Heart left ventricle (tissue), 16 donors: ENCODE measurements at regions of chr9 and their contacts with region 1.

Region 1: DNA sequence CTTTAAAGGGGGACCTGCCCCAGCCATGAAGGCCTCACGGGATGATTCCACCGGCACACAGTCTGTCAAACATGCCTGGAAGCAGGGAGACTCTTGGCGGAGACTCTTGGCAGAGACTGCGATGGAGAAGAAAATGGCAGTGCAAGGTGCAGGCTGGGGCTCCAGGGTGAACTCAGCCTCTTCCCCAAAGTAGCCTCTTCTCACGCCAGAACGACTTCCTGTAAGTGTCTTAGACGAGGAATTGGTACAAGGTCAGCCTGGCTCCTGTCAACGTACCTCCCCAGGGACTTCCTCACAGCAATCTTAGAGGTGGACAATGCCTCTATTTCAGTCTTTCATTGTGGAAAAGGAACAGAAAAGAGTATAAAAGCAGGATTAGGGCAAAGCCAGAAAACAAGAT is 109.3 kb downstream of the UGCG start:
- DNase-seq: no peak
- ATAC-seq: no peak
- H3K4me3 ChIP-seq: no peak overlapping the region
- H3K27ac ChIP-seq: peak overlapping the region in 2 of 12 donors; percentile 8 to 27
- H3K4me1 ChIP-seq: peaks cover 0 to 23% (median 0%) of the 10 kb centered on the region in 12 donors
- H3K27me3 ChIP-seq: no peaks in the 10 kb centered on the region
- CTCF ChIP-seq: no peak
- POLR2A ChIP-seq: no peak

Region 2: GRCh38 chr9:111839388-111839787 is 166.6 kb before region 1 on chr9:
- intact Hi-C with region 1: no loop called
- DNase-seq: peak in 1 of 5 donors; percentile 34
- ATAC-seq: peak in 2 of 4 donors; percentile 10 to 45
- H3K4me3 ChIP-seq: no peak overlapping the region
- H3K27ac ChIP-seq: no peak overlapping the region
- H3K4me1 ChIP-seq: peaks cover 0 to 25% (median 0%) of the 10 kb centered on the region in 12 donors
- H3K27me3 ChIP-seq: no peaks in the 10 kb centered on the region
- CTCF ChIP-seq: no peak
- POLR2A ChIP-seq: no peak

Region 3: GRCh38 chr9:111957856-111958652 is 47.9 kb before region 1 on chr9:
- intact Hi-C with region 1: no loop called
- DNase-seq: no peak
- ATAC-seq: peak; percentile 21 to 74 (median 47)
- H3K4me3 ChIP-seq: peak overlapping the region in 3 of 12 donors; percentile 5 to 28 (median 19)
- H3K27ac ChIP-seq: peak overlapping the region in 1 of 12 donors; percentile 77
- H3K4me1 ChIP-seq: peaks cover 0 to 43% (median 7%) of the 10 kb centered on the region in 12 donors
- H3K27me3 ChIP-seq: no peaks in the 10 kb centered on the region
- CTCF ChIP-seq: no peak
- POLR2A ChIP-seq: no peak

Region 4: DNA sequence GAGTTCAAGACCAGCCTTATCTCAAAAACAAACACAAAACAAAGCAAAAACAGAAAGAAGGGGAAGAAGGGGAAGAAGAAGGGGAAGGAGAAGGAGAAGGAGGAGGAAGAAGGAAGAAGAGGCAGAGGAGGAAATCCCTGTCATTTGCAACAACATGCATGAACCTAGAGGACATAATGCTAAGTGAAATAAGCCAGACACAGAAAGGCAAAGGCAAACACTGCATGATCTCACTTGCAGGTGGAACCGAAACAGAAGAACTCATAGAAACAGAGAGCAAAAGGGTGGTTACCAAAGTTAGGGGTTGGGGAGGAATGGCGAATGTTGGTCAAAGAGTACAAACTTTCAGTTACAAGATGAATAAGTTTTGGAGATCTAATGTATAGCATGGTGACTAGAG is 26.1 kb after region 1 on chr9:
- intact Hi-C with region 1: loop called in 1 of 10 experiments (anchors 2 kb)
- DNase-seq: no peak
- ATAC-seq: no peak
- H3K4me3 ChIP-seq: no peak overlapping the region
- H3K27ac ChIP-seq: peak overlapping the region in 1 of 12 donors; percentile 7
- H3K4me1 ChIP-seq: peaks cover 0 to 54% (median 0%) of the 10 kb centered on the region in 12 donors
- H3K27me3 ChIP-seq: no peaks in the 10 kb centered on the region
- CTCF ChIP-seq: no peak
- POLR2A ChIP-seq: no peak